ENCODE measurements at regions of chr4 and their contacts with region 1.

Region 1: GRCh38 chr4:159206427-159206871 is 103.6 kb downstream of the RAPGEF2 start:
- DNase-seq: no peak
- ATAC-seq: peak in 1 of 8 donors; percentile 30
- H3K4me3 ChIP-seq: no peak overlapping the region
- H3K27ac ChIP-seq: peak overlapping the region in 6 of 10 donors; percentile 7 to 36 (median 23)
- H3K4me1 ChIP-seq: peaks cover 8 to 89% (median 58%) of the 10 kb centered on the region in 9 donors
- H3K27me3 ChIP-seq: no peaks in the 10 kb centered on the region
- CTCF ChIP-seq: no peak

Region 2: GRCh38 chr4:158722917-158723793 is 483.3 kb before region 1 on chr4 and contains the start of gene PPID:
- intact Hi-C with region 1: loop called in 6 of 10 experiments (anchors 5 to 10 kb)
- DNase-seq: peak; percentile 82 to 88
- ATAC-seq: peak; percentile 97 to 99 (median 98)
- H3K4me3 ChIP-seq: peak within 1 kb of the TSS; percentile 62 to 97 (median 78)
- H3K27ac ChIP-seq: peak within 1 kb of the TSS; percentile 82 to 97 (median 92)
- H3K4me1 ChIP-seq: peaks cover 0 to 29% (median 10%) of the 10 kb centered on the region in 9 donors
- H3K27me3 ChIP-seq: no peaks in the 10 kb centered on the region
- CTCF ChIP-seq: peak in 2 of 9 donors; percentile 18 to 19
- total RNA-seq, gene PPID: 23.8 to 37.1 (median 33.1) TPM

Region 3: DNA sequence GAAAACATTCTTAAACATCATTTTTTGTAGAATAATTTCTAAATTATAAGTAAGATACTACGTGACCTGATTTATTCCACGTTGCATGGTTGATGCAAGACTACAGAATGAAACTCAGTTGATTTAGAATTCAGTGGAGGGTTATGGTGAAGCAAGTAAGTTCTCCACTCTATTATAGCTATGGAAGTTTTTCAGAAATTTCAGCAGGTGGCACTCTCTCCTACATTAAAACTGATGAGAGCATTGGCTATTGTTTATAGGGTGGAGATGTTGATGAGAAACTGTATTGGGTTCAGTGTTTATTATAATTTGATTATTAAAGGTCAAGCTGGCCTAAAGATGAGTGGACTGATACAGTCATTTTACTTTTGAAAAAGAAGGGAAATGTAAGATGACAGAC is 349.6 kb before region 1 on chr4:
- intact Hi-C with region 1: loop called in 9 of 10 experiments (anchors 2 to 10 kb)
- DNase-seq: no peak
- ATAC-seq: peak in 7 of 8 donors; percentile 29 to 85 (median 76)
- H3K4me3 ChIP-seq: no peak overlapping the region
- H3K27ac ChIP-seq: no peak overlapping the region
- H3K4me1 ChIP-seq: peaks cover 0 to 18% (median 4%) of the 10 kb centered on the region in 9 donors
- H3K27me3 ChIP-seq: no peaks in the 10 kb centered on the region
- CTCF ChIP-seq: peak in 8 of 9 donors; percentile 23 to 75 (median 60)

Measured in heart right ventricle (tissue), 16 donors.